Endothelial cell of umbilical vein (primary cell): ENCODE measurements at regions of chr15 and their contacts with region 1.

Region 1: DNA sequence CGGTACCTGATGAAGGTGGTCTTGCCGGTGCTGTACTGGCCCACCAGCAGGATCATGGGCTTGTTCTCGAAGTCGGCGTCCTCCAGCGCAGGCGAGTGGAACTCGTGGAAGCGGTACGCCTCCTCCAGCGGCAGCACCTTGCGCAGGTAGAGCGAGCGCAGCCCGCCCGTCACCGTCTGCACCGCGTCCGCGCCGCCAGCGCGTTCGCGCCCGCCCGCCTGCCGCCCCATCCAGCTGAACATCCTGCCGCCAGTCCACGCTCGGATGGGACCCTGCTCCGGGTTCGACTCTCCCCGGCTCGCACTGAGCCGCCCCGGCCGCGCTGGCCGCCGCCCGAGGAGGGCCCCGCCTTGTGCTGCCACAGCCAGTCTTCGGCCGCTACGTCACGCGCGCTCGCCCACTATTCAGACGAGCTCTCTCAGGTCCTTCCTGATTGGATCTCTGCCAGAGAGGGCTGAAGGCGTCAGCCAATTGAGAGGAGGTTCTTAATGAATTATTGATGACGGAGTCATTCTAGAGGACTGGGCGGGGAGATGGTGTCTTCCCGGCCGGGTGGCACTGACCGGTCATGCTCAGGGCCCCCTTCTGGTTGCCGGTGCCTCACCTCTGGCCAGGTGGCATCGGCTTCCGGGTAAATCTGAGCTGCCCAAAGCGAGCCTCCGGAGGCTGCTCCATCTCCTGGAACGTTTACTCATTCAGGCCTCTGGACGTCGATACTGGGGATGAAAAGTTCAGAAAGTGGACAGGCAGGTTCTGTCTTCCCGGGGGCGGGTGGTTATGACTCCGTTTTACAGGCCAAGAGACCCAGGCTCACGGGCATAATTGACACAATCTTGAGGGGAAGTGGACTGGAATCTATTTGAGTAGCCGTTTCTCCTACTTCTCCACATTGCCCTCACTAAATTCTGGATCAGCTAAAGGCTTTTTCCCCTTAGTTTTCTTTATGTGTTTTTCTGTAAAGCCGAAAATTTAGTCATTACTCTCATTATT is at the start of gene EHD4:
- DNase-seq: peak; percentile 98
- H3K4me3 ChIP-seq: peak within 1 kb of the TSS; percentile 84 to 100 (median 97)
- H3K27ac ChIP-seq: peak within 1 kb of the TSS; percentile 69
- H3K4me1 ChIP-seq: peaks cover 35% of the 10 kb centered on the region
- H3K27me3 ChIP-seq: no peaks in the 10 kb centered on the region
- CTCF ChIP-seq: peak; percentile 23 to 41
- POLR2A ChIP-seq: peak; percentile 98
- total RNA-seq, gene EHD4: 126 and 128 TPM in 2 replicates

Region 2: DNA sequence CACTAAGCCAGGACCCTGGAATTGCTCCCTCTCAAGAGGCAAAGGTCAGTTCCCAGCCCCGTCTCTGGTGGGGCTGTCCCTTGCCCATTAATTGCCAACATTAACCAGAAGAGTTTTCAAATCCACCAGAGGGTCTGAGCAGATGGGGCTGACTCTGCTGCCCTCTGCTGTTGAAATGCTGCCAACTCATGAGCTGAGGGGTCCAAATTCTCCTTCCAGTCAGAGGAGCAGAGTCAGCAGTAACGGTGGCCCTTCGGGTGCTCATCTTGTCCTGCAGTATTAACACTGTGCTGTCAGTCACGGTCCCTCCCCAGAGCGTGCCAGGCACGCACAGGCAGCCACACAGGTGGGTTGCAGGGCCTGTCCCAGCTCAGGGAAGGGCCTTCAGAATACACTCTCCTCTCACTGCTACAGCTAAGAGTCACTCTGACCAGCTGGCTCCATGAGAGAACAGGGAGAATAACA is 68.0 kb before region 1 on chr15:
- CTCF ChIA-PET with region 1: interaction called, 31 read pairs
- POLR2A ChIA-PET with region 1: no interaction called
- dilution Hi-C with region 1: no loop called
- intact Hi-C with region 1: no loop called
- DNase-seq: peak; percentile 75
- H3K4me3 ChIP-seq: no peak overlapping the region
- H3K27ac ChIP-seq: no peak overlapping the region
- H3K4me1 ChIP-seq: no peaks in the 10 kb centered on the region
- H3K27me3 ChIP-seq: no peaks in the 10 kb centered on the region
- CTCF ChIP-seq: peak; percentile 85
- POLR2A ChIP-seq: no peak

Region 3: DNA sequence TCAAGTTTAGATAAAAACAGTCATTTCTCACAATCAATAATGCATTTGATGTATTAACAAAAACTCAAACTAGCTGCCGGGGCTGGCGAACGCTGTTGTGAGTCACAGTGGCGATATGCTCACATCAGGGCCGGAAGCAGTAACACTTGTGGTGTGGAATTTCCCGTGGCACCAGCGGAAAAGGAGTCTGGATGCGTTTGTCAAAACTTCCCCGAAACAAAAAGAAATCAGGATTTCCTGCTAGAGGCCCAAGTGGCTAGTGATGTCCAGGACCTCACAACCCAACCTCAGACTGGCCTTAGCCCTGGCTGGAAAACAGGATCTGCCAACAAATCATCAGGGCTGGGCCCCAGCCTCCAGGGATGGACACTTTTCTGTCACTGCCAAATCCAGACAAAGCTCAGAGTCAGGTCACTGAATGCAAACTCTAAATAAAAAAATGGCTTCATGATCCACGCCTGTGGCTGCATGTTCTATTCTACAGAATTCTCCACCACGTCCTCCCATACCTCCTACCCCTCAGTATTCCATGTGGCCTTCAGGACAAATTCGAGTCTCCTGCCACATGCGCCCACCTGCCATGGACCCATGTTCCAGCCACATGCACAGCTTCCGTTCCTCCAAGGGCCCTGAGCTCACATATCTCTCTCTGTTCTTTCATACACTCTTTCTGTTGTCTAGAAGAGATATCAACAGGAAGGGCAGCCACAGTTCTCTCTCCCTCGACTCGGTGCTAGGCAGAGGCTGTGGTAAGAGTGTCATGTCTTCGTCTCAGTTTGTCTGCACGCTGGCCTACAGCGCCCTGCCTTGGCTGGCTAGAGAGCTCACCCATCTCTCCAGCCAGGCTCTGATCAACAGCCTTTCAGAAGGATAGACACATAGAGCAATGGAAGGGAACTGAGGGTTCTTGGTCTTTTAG is 35.6 kb before region 1 on chr15:
- CTCF ChIA-PET with region 1: interaction called, 44 read pairs
- POLR2A ChIA-PET with region 1: interaction called, 11 read pairs
- dilution Hi-C with region 1: no loop called
- intact Hi-C with region 1: loop called (anchors 1 kb)
- DNase-seq: peak; percentile 97
- H3K4me3 ChIP-seq: no peak overlapping the region
- H3K27ac ChIP-seq: peak overlapping the region; percentile 99
- H3K4me1 ChIP-seq: peaks cover 96% of the 10 kb centered on the region
- H3K27me3 ChIP-seq: no peaks in the 10 kb centered on the region
- CTCF ChIP-seq: no peak
- POLR2A ChIP-seq: peak; percentile 85

Region 4: DNA sequence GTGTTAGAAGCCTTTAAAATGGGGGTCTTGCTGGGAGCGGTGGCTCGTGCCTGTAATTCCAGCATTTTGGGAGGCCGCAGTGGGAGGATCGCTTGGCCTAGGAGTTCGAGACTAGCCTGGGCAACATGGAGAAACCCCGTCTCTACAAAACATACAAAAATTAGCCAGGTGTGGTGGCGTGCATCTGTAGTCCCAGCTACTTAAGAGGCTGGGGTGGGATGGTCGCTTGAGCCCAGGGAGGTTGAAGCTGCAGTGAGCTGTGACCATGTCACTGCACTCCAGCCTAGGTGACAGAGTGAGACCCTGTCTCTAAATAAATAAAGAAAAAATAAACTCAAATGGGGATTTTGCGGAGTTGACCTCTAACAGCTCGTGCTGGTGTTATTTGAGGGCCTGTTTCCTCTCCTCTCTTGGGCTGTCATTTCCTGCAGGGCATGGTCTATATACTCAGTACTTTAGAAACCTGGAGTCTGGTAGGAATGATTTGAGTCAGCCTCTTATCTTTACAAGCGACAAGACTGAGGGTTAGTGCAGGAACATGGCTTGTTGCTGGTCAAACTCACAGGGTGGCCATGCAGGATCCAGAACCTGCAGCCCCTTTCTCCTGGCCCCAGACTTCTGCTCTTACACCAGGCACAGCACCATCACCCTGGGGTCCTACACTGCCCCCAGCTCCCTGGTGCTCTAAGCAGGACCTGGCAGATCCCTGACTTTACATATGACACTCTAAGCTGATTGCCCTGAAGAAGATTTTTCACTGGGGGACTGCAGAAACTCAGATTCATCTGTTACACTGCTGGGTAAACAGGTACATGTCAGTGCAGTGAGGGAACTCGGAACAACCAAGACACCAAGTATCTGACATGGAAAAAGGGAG is 15.3 kb before region 1 on chr15:
- CTCF ChIA-PET with region 1: interaction called, 44 read pairs
- POLR2A ChIA-PET with region 1: interaction called, 15 read pairs
- dilution Hi-C with region 1: no loop called
- intact Hi-C with region 1: loop called (anchors 1 kb)
- DNase-seq: peak; percentile 85
- H3K4me3 ChIP-seq: peak overlapping the region in 1 of 3 experiments; percentile 16
- H3K27ac ChIP-seq: peak overlapping the region; percentile 98
- H3K4me1 ChIP-seq: peaks cover 66% of the 10 kb centered on the region
- H3K27me3 ChIP-seq: no peaks in the 10 kb centered on the region
- CTCF ChIP-seq: no peak
- POLR2A ChIP-seq: no peak

Region 5: GRCh38 chr15:42056934-42057779 is 84.6 kb after region 1 on chr15:
- CTCF ChIA-PET with region 1: no interaction called
- POLR2A ChIA-PET with region 1: no interaction called
- dilution Hi-C with region 1: no loop called
- intact Hi-C with region 1: loop called (anchors 5 kb)
- DNase-seq: peak; percentile 84
- H3K4me3 ChIP-seq: peak overlapping the region in 1 of 3 experiments; percentile 3
- H3K27ac ChIP-seq: no peak overlapping the region
- H3K4me1 ChIP-seq: peaks cover 4% of the 10 kb centered on the region
- H3K27me3 ChIP-seq: peaks cover 2 to 7% of the 10 kb centered on the region in 2 experiments
- CTCF ChIP-seq: peak; percentile 81 to 85
- POLR2A ChIP-seq: no peak

Region 6: GRCh38 chr15:42215913-42216829 is 243.6 kb after region 1 on chr15:
- CTCF ChIA-PET with region 1: no interaction called
- POLR2A ChIA-PET with region 1: no interaction called
- dilution Hi-C with region 1: no loop called
- intact Hi-C with region 1: no loop called
- DNase-seq: peak; percentile 49
- H3K4me3 ChIP-seq: no peak overlapping the region
- H3K27ac ChIP-seq: no peak overlapping the region
- H3K4me1 ChIP-seq: no peaks in the 10 kb centered on the region
- H3K27me3 ChIP-seq: no peaks in the 10 kb centered on the region
- CTCF ChIP-seq: no peak
- POLR2A ChIP-seq: no peak